ENCODE measurements at regions of chr1 and their contacts with region 1.

Region 1: DNA sequence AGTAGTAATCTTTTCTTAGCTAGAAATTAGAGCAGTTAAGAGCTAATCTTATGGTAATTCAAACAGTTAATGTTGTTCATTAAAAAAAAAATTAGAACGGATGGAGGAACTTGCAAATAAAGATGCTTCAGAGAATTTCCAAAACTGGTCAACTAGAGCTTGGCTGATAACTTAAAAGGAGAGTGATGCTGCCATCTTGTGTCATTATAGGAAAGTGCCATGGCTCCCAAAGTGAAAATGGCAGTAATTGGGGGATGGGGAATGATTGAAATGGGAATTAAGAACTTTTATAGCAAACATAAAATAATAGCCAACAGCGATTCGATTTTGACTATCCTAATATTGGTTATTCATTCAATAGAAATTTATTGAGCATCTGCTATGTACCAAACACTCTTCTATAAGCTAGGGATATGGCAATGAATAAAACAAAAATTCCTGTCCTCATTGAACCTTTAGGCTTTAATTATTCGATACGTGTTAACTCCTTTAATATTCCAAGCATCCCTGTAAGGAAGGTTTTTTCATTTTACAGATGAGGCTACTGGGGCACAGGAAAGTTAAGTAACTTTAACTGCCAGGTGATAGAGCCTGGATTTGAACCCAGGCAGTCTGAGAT is 5.7 kb upstream of the PLPP3 start:
- DNase-seq: peak; percentile 38 to 71
- H3K4me3 ChIP-seq: no peak overlapping the region
- H3K4me1 ChIP-seq: no peaks in the 10 kb centered on the region; the same call in 1 of the 2 replicates
- H3K27me3 ChIP-seq: no peaks in the 10 kb centered on the region; the same call in 1 of the 2 replicates

Region 2: GRCh38 chr1:55284852-55285251 is 1300.2 kb before region 1 on chr1:
- in situ Hi-C with region 1: loop called (anchors 10 kb)
- DNase-seq: peak in 1 of 2 experiments; percentile 49
- H3K4me3 ChIP-seq: no peak overlapping the region
- H3K4me1 ChIP-seq: no peaks in the 10 kb centered on the region
- H3K27me3 ChIP-seq: no peaks in the 10 kb centered on the region

Region 3: GRCh38 chr1:55380355-55380970 is 1204.6 kb before region 1 on chr1:
- in situ Hi-C with region 1: loop called (anchors 10 kb)
- DNase-seq: no peak
- H3K4me3 ChIP-seq: no peak overlapping the region
- H3K4me1 ChIP-seq: no peaks in the 10 kb centered on the region
- H3K27me3 ChIP-seq: no peaks in the 10 kb centered on the region

Measured in HAP-1 (cell line).